Posterior cingulate gyrus (tissue), 11 donors: ENCODE measurements at regions of chr4 and their contacts with region 1.

Region 1: GRCh38 chr4:105471566-105472176 is 2.2 kb downstream of the PPA2 start:
- DNase-seq: peak in 6 of 10 donors; percentile 54 to 87 (median 62)

Region 2: DNA sequence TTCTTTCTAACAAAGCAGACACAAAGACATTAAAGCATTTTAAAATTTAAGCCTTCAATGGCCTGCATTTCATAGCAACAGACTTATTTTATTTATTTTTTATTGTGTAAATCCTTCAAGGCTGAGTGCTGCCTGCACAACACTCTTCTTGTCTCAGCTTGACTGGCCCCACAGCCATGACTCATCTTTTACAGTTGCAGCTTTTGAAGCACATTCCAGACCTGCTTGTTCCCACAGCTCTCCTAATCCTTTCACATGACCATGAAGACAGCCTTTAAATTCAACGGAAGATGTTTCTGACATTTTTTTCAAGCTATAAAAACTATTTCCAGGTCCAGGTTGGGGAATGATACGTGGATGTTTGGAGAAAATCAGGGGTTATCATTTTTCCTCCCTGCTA is 1475.0 kb before region 1 on chr4:
- intact Hi-C with region 1: loop called (anchors 10 kb)
- DNase-seq: peak in 6 of 10 donors; percentile 9 to 70 (median 20)

Region 3: DNA sequence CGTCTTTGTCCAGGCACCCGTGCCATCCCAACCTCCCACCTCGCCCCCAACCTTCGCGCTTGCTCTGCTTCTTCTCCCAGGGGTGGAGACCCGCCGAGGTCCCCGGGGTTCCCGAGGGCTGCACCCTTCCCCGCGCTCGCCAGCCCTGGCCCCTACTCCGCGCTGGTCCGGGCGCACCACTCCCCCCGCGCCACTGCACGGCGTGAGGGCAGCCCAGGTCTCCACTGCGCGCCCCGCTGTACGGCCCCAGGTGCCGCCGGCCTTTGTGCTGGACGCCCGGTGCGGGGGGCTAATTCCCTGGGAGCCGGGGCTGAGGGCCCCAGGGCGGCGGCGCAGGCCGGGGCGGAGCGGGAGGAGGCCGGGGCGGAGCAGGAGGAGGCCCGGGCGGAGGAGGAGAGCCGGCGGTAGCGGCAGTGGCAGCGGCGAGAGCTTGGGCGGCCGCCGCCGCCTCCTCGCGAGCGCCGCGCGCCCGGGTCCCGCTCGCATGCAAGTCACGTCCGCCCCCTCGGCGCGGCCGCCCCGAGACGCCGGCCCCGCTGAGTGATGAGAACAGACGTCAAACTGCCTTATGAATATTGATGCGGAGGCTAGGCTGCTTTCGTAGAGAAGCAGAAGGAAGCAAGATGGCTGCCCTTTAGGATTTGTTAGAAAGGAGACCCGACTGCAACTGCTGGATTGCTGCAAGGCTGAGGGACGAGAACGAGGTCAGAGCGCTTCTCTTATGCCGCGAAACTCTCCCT is 325.2 kb before region 1 on chr4 and contains the start of gene TET2:
- intact Hi-C with region 1: loop called (anchors 2 kb)
- DNase-seq: peak; percentile 73 to 97 (median 84)

Region 4: GRCh38 chr4:105637408-105638176 is 165.9 kb after region 1 on chr4:
- intact Hi-C with region 1: no loop called
- DNase-seq: peak; percentile 17 to 92 (median 69)